ENCODE measurements at regions of chr3 and their contacts with region 1.

Region 1: DNA sequence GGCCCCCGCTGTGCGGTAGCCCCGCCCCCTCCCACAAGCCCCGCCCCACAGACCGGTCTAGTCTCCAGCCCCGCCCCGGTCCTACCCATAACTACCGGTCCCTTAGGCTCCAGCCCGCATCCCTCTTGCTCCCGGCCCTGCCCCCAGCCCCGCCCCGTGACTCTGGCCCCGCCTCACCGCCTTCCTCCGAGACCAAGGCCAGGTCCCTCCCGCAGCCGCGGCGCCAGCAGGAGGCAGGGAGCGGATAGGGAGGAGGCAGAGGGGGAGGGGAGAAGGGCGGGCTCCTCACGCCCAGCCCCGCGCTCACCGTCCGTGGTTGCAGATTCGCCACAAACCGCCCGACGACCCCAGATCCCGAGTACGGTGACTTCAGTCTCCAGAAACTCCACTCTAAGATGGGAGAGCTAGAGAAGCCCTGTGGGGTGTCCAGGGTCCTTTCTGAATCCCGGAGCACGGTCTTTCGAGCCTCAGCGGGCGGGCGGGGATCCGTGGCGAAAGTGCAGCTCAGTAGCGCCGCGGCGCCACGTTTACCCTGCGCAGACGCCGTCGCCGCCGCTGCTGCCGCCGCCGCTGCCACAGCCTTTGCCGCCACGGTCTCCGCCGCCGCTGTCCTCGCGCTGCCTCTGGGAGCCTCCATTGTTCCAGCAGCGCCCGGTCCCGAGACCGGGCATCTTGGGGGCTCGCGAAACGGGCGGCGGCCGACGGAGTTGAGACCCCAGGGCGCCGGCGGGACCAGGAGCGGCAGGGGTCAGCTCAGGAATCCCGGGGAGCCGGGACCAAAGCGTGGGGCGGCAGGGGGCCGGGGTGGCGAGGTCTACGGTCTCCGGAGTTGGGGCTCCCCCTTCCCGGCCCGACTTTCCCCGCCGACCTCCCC is at the start of gene BRPF1:
- DNase-seq: peak; percentile 90
- ATAC-seq: peak; percentile 97
- H3K4me3 ChIP-seq: peak within 1 kb of the TSS; percentile 94
- H3K27ac ChIP-seq: peak within 1 kb of the TSS; percentile 100
- H3K4me1 ChIP-seq: peaks cover 12% of the 10 kb centered on the region
- H3K27me3 ChIP-seq: no peaks in the 10 kb centered on the region
- CTCF ChIP-seq: no peak
- EP300 ChIP-seq: peak in 1 of 2 experiments; percentile 99; a peak in 2 of 4 replicates
- POLR2A ChIP-seq: peak; percentile 92
- RAD21 ChIP-seq: no peak
- polyA plus RNA-seq, gene BRPF1: 1.2 to 1.4 TPM

Region 2: DNA sequence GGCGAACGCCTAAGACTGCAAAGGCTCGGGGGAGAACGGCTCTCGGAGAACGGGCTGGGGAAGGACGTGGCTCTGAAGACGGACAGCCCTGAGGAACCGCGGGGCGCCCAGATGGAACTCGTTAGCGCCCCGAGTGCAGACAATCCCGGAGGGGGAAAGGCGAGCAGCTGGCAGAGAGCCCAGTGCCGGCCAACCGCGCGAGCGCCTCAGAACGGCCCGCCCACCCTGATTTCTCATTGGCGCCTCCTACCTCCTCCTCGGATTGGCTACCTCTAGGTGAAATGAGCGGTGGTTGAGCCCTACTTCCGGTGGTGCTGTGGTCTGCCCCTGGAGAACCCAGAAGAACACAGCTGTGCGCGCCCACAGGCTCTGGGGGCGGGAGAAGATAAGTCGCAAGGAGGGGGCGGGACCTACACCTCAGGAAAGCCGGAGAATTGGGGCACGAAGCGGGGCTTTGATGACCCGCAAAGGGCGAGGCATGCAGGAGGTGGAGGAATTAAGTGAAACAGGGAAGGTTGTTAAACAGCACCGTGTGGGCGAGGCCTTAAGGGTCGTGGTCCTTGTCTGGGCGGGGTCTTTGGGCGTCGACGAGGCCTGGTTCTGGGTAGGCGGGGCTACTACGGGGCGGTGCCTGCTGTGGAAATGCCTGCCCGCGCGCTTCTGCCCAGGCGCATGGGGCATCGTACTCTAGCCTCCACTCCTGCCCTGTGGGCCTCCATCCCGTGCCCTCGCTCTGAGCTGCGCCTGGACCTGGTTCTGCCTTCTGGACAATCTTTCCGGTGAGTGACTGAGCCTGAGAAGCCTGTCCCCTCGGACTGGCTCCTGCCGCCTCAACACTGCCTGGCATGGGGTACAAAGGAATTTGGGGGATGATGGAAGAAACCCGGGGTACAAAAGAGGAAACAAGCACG is 18.5 kb after region 1 on chr3 and contains the start of gene OGG1:
- CTCF ChIA-PET with region 1: interaction called, 24 read pairs
- POLR2A ChIA-PET with region 1: interaction called, 7 read pairs
- RAD21 ChIA-PET with region 1: interaction called, 8 read pairs
- SMC1A ChIA-PET with region 1: interaction called, 16 read pairs
- in situ Hi-C with region 1: no loop called
- intact Hi-C with region 1: loop called (anchors 1 kb)
- DNase-seq: peak; percentile 95
- ATAC-seq: peak; percentile 95
- H3K4me3 ChIP-seq: peak within 1 kb of the TSS; percentile 88
- H3K27ac ChIP-seq: peak within 1 kb of the TSS; percentile 82
- H3K4me1 ChIP-seq: peaks cover 21% of the 10 kb centered on the region
- H3K27me3 ChIP-seq: no peaks in the 10 kb centered on the region
- CTCF ChIP-seq: no peak
- EP300 ChIP-seq: peak in 1 of 2 experiments; percentile 20; a peak in 1 of 4 replicates
- POLR2A ChIP-seq: peak; percentile 62
- RAD21 ChIP-seq: no peak
- polyA plus RNA-seq, gene OGG1: 4.8 to 6.9 TPM

Region 3: GRCh38 chr3:9809615-9810432 is 78.4 kb after region 1 on chr3 and contains the start of gene TTLL3:
- CTCF ChIA-PET with region 1: interaction called, 3 read pairs
- POLR2A ChIA-PET with region 1: interaction called, 5 read pairs
- RAD21 ChIA-PET with region 1: interaction called, 5 read pairs
- SMC1A ChIA-PET with region 1: interaction called, 3 read pairs
- in situ Hi-C with region 1: no loop called
- intact Hi-C with region 1: loop called (anchors 5 kb)
- DNase-seq: no peak
- ATAC-seq: peak; percentile 74
- H3K4me3 ChIP-seq: peak within 1 kb of the TSS; percentile 81
- H3K27ac ChIP-seq: peak within 1 kb of the TSS; percentile 75
- H3K4me1 ChIP-seq: peaks cover 13% of the 10 kb centered on the region
- H3K27me3 ChIP-seq: no peaks in the 10 kb centered on the region
- CTCF ChIP-seq: no peak
- EP300 ChIP-seq: no peak
- POLR2A ChIP-seq: peak; percentile 93
- RAD21 ChIP-seq: no peak
- polyA plus RNA-seq, gene TTLL3: 4.2 to 6.8 TPM